Motor neuron (in vitro differentiated cells): ENCODE measurements at regions of chr7 and their contacts with region 1.

Region 1: GRCh38 chr7:101507791-101508252 is 121.3 kb downstream of the MYL10 start:
- ATAC-seq: peak in 7 of 8 experiments; percentile 27 to 78 (median 72)
- H3K4me3 ChIP-seq: no peak overlapping the region
- H3K27ac ChIP-seq: no peak overlapping the region
- H3K4me1 ChIP-seq: no peaks in the 10 kb centered on the region

Region 2: DNA sequence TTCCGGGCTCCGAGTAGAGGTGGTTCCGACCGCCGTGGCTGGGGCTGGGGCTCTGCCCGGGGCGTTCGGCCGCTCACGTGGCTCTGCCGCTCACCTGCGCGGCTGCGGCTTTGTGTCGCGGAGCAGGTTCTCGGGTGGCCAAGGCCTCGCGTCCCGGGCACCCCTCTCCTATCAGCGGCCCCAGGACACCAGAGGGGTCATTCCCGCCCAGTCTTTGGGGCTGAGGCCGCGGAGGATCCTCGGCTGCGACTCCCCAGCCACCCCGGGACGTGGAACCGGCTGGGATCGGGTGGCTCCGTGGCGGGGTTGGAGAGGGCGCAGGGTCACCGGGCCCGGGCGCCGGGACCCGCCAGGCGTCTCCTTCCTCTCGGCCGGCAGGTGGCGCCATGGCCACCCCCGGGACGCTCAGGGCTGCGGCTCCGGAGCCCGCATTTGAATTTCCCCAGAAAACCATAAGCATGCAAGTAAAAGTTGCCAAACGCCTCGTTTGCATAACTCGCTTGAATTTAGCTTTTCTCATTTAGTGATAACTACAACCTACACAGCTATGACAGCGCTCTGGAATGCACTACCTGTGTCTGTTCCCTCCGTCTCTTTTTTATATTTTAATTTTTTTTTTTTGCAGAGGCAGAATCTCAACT is 144.0 kb before region 1 on chr7:
- in situ Hi-C with region 1: loop called in 2 of 9 experiments (anchors 25 kb)
- ATAC-seq: peak; percentile 87 to 98 (median 92)
- H3K4me3 ChIP-seq: peak overlapping the region; percentile 55 to 95 (median 73)
- H3K27ac ChIP-seq: peak overlapping the region; percentile 49 to 62
- H3K4me1 ChIP-seq: no peaks in the 10 kb centered on the region

Region 3: GRCh38 chr7:101564778-101565211 is 57.0 kb after region 1 on chr7:
- in situ Hi-C with region 1: no loop called
- ATAC-seq: peak in 6 of 8 experiments; percentile 50 to 82 (median 74)
- H3K4me3 ChIP-seq: no peak overlapping the region
- H3K27ac ChIP-seq: no peak overlapping the region
- H3K4me1 ChIP-seq: no peaks in the 10 kb centered on the region

Region 4: GRCh38 chr7:101950434-101951119 is 442.8 kb after region 1 on chr7:
- in situ Hi-C with region 1: no loop called
- ATAC-seq: peak in 3 of 8 experiments; percentile 40 to 69 (median 62)
- H3K4me3 ChIP-seq: no peak overlapping the region
- H3K27ac ChIP-seq: no peak overlapping the region
- H3K4me1 ChIP-seq: peaks cover 13 to 16% of the 10 kb centered on the region in 2 donors

Region 5: GRCh38 chr7:102306875-102307677 is 799.3 kb after region 1 on chr7:
- in situ Hi-C with region 1: no loop called
- ATAC-seq: peak; percentile 88 to 95 (median 92)
- H3K4me3 ChIP-seq: no peak overlapping the region
- H3K27ac ChIP-seq: no peak overlapping the region
- H3K4me1 ChIP-seq: peaks cover 9 to 23% of the 10 kb centered on the region in 2 donors